ENCODE measurements at regions of chr15 and their contacts with region 1.

Region 1: GRCh38 chr15:76139368-76140073 is 79.7 kb downstream of the TMEM266 start:
- DNase-seq: peak; percentile 79 to 94
- ATAC-seq: peak; percentile 81 to 94
- H3K4me3 ChIP-seq: no peak overlapping the region
- H3K27ac ChIP-seq: no peak overlapping the region
- H3K4me1 ChIP-seq: no peaks in the 10 kb centered on the region
- CTCF ChIP-seq: peak; percentile 93
- EP300 ChIP-seq: no peak
- POLR2A ChIP-seq: no peak
- RAD21 ChIP-seq: peak; percentile 88 to 90

Region 2: DNA sequence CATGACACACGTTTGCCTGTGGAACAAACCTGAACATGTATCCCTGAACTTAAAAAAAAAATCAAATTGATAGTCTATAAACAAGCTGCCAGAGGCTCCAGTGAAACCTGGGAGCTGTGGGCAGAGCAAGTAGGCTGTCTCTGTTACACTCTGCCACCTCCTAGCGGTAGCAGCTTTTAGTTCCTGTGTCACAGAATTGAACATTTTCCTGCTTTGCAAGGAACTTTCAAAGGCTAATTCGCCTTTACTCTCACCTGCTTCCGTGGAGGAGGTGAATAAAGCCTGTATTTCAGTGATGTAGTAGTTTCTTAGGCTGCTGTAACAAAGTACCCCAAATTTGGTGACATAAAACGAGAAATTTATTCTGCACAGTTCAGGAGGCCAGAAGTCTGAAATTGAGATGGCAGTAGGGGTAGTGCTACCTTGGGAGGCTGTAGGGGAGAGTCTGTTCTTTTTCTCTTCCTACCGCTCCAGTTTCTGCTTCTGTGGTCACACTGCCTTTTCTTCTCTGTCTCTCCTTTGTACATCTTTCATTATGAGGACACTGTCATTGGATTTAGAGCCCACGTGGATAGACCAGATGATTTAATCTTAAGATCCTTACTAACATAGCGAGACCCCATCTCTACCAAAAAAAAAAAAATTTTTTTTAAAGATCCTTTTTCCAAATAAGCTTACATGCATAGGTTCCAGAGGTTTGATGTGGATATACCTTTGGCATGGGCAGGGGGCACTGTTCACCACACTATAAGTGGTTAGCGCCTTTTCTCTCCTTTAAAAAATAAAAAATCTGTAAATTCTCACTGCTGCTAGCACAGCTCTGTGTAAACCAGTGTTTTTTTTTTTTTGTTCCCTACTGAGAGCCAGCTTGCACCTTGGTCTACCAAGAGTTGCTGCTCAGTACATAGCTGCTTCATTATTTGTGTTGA is 210.6 kb before region 1 on chr15:
- CTCF ChIA-PET with region 1: interaction called, 27 read pairs
- POLR2A ChIA-PET with region 1: no interaction called
- DNase-seq: peak; percentile 38 to 75
- ATAC-seq: peak; percentile 91 to 94
- H3K4me3 ChIP-seq: no peak overlapping the region
- H3K27ac ChIP-seq: no peak overlapping the region
- H3K4me1 ChIP-seq: peaks cover 9% of the 10 kb centered on the region; the same call in 2 of the 3 replicates
- CTCF ChIP-seq: peak; percentile 64
- EP300 ChIP-seq: no peak
- POLR2A ChIP-seq: no peak
- RAD21 ChIP-seq: peak; percentile 66 to 70

Region 3: DNA sequence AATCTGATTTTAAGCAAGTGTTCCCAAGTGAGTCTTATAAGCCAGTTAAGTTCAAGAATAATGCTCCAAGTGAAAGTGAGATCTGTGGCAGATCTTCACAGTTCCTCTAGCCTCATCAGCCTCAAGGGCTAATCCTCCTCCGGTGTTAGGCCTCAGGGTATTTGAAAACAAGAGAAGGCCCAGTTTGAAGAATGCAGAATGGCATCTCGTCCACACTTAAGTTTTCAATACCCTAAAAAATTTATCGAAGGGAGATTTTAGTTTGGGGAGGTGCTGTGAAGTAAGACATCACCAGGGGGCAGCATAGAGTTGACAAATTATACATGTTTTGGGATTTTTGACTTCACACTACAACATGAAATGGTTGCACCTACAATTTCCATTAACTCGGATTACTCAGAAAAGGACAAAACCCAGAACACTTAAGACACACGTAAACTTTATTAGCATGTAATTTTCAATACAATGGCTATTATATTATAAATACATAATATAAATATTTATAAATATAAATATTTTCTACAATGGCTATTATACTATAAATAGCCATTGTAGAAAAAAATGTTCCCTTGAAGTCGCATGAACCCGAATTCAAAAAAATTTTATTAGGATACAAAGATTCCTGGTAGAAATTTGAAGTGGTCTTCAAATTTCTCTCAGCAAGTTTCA is 82.1 kb before region 1 on chr15:
- CTCF ChIA-PET with region 1: interaction called, 448 read pairs
- POLR2A ChIA-PET with region 1: interaction called, 3 read pairs
- DNase-seq: peak; percentile 53 to 61
- ATAC-seq: no peak
- H3K4me3 ChIP-seq: no peak overlapping the region
- H3K27ac ChIP-seq: no peak overlapping the region
- H3K4me1 ChIP-seq: peaks cover 15% of the 10 kb centered on the region
- CTCF ChIP-seq: peak; percentile 92
- EP300 ChIP-seq: no peak
- POLR2A ChIP-seq: no peak
- RAD21 ChIP-seq: peak; percentile 70 to 71

Region 4: DNA sequence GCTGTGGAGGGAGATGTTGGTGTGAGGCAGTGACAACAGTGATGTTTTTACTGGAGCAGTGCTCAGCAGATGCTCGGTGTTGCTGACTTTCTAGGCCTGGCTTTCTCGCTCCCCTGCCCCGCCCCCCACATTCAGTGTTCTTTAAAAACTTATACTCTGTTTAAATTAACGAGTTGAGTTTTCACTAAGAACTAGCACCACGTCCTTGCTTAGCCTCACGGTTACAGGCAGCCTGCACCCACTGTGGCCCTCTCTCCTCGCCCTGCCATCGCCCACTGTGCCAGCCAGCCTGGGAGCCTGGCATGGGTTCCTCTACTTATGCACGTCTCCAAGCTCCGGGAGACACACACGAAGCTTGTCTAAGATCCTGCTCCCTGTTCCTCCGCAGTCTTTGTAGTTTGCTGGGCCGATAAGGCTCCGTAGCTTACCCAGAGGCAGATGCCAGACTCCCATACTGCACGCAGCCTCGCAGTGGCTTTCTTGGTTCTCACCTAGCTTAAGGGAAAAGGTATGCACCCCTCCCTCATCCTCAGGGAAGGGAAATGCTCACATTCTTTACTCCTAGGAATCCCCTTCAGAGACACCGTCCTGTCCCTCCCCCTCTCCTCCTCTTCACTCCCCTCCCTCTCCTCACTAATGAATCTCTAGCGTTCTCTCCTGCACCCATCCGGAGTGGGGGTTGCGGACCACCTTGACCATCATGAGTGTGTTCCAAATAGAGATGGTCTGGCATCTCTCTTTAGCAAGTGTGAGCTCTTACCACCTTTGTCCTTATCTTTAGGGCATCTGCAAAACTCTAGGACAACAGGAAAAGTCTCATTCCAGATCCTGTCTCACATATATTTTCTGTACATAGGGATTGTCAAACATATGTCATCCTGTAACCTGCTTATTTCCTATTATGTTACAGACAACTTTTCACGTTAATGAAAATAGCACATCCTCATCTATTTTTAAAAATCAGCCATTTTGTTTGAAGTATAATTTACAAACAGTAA is 23.3 kb before region 1 on chr15:
- CTCF ChIA-PET with region 1: interaction called, 44 read pairs
- POLR2A ChIA-PET with region 1: no interaction called
- DNase-seq: no peak
- ATAC-seq: no peak
- H3K4me3 ChIP-seq: no peak overlapping the region
- H3K27ac ChIP-seq: no peak overlapping the region
- H3K4me1 ChIP-seq: peaks cover 2% of the 10 kb centered on the region; the same call in 1 of the 3 replicates
- CTCF ChIP-seq: no peak
- EP300 ChIP-seq: no peak
- POLR2A ChIP-seq: no peak
- RAD21 ChIP-seq: no peak

Measured in A549 (cell line).